Activated CD4-positive, alpha-beta memory T cell treated with anti-CD3 and anti-CD28 coated beads, Interleukin-2, amount 10 ng/mL, durations not matched to agents 7 days and 5 days (primary cell): ENCODE measurements at regions of chr1 and their contacts with region 1.

Region 1: GRCh38 chr1:93692983-93693591 is 11.4 kb upstream of the BCAR3 start:
- DNase-seq: peak; percentile 72
- H3K4me3 Mint-ChIP-seq: no peak overlapping the region
- H3K27ac Mint-ChIP-seq: peak overlapping the region; percentile 91
- H3K4me1 Mint-ChIP-seq: no peaks in the 10 kb centered on the region
- H3K27me3 Mint-ChIP-seq: peaks cover 3% of the 10 kb centered on the region

Region 2: DNA sequence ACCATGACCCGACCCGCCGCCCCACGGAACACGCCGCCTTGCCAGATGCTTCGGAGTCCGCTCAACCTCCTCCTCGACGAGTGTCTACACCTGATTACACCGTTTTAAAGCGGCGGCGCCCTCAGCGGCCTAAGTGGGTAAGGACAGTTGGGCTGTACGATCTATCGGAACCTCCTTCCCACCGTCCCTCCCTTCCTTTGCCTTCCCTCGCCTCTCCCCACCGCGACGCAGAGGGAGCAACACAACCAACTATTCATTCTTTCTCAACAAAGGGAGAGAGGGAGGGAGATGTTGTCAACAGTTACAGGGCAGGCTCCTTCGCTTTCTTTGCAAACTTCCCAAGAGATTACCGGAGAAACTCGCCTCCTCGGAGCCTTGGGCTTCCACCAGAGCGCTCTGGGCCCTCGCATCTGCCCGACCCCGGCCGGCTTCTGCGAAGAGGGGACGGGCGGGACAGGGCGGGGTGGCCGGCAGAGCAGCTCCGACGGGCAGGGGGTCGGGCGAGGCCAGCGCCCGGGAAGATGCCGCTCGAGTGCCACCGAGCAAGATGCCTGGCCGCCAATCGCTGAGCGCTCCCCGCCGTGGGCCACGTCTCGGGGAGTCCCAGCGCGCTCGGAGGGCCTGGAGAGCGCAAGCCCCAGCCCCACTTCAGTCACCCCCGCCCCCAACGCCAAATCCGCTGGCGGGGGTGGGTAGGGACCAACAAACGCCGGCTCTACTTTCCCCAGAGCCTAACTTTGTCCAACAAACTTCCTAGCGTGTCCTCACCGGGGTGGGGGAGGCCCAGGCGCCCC is 12.1 kb before region 1 on chr1:
- CTCF ChIA-PET with region 1: interaction called, 12 read pairs
- POLR2A ChIA-PET with region 1: interaction called, 13 read pairs
- DNase-seq: peak; percentile 65
- H3K4me3 Mint-ChIP-seq: peak overlapping the region; percentile 81
- H3K27ac Mint-ChIP-seq: no peak overlapping the region
- H3K4me1 Mint-ChIP-seq: peaks cover 27% of the 10 kb centered on the region
- H3K27me3 Mint-ChIP-seq: peaks cover 66% of the 10 kb centered on the region

Region 3: GRCh38 chr1:93708734-93709481 is 15.8 kb after region 1 on chr1:
- CTCF ChIA-PET with region 1: interaction called, 4 read pairs
- POLR2A ChIA-PET with region 1: interaction called, 21 read pairs
- DNase-seq: peak; percentile 51
- H3K4me3 Mint-ChIP-seq: no peak overlapping the region
- H3K27ac Mint-ChIP-seq: peak overlapping the region; percentile 48
- H3K4me1 Mint-ChIP-seq: peaks cover 72% of the 10 kb centered on the region
- H3K27me3 Mint-ChIP-seq: peaks cover 3% of the 10 kb centered on the region

Region 4: GRCh38 chr1:93715529-93716126 is 22.5 kb after region 1 on chr1:
- CTCF ChIA-PET with region 1: interaction called, 9 read pairs
- POLR2A ChIA-PET with region 1: interaction called, 17 read pairs
- DNase-seq: peak; percentile 55
- H3K4me3 Mint-ChIP-seq: no peak overlapping the region
- H3K27ac Mint-ChIP-seq: peak overlapping the region; percentile 81
- H3K4me1 Mint-ChIP-seq: peaks cover 66% of the 10 kb centered on the region
- H3K27me3 Mint-ChIP-seq: peaks cover 5% of the 10 kb centered on the region

Region 5: DNA sequence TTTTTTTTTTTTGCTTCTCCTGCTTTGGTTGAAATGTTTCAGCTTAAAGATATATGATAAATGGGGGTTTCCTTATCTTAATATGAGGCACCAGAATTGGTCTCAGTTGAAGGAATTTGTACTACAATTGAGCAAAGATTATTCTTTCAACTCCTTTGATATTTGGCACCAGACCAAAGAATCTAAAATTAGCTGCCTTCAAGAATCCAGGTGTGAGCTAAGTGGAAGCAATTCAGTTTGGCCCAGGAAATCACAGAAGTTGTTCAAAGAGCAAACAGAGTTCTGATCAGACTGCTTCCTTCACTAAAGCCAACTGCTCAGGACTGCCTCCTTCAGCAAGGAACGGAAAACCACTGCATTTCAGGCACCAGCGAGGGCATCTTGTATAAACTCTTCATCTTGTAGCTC is 56.8 kb after region 1 on chr1:
- CTCF ChIA-PET with region 1: no interaction called
- POLR2A ChIA-PET with region 1: no interaction called
- DNase-seq: no peak
- H3K4me3 Mint-ChIP-seq: no peak overlapping the region
- H3K27ac Mint-ChIP-seq: no peak overlapping the region
- H3K4me1 Mint-ChIP-seq: peaks cover 27% of the 10 kb centered on the region
- H3K27me3 Mint-ChIP-seq: peaks cover 11% of the 10 kb centered on the region

Region 6: GRCh38 chr1:93853940-93854339 is 160.9 kb after region 1 on chr1:
- CTCF ChIA-PET with region 1: no interaction called
- POLR2A ChIA-PET with region 1: no interaction called
- DNase-seq: no peak
- H3K4me3 Mint-ChIP-seq: no peak overlapping the region
- H3K27ac Mint-ChIP-seq: no peak overlapping the region
- H3K4me1 Mint-ChIP-seq: peaks cover 11% of the 10 kb centered on the region
- H3K27me3 Mint-ChIP-seq: peaks cover 37% of the 10 kb centered on the region